Caco-2 (cell line): ENCODE measurements at regions of chr15 and their contacts with region 1.

Region 1: DNA sequence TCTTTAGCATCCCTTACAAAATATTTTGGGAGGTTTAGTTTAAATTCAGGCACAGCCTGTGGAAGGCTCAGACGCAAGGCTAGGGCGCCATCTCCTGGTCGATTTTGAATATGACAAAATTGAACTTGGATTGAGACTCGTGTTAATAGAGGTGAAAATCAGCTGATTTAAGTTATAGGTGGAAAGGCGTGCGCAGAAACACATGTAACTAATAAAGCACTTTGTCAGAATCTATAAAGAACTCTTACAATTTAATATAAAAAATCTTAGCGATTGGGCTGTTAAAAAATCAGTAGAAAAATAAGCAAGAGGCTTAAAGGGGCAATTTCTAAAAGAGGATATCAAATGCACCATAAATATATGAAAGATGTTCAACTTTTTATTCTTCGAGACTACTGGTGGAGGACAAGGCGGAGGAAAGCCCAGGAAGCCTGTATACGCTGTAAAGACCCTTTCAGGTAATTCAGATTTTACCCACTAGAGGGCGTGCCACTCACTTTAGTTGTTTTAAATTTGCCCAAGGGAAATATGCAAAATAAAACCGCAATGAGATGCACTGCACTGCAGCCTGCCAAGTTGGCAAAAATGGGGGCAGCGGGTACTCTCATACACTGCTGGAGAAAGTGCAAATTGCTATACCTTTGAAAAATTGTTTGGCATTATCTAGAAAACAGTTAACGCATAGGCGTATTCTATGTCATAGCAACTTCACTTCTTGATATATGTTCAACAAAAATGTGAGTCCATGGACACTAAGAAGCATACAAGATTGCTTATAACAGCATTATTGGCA is 64.7 kb downstream of the SLC30A4 start:
- DNase-seq: peak; percentile 62 to 82
- H3K4me3 ChIP-seq: peak overlapping the region; percentile 27
- H3K4me3 Mint-ChIP-seq: peak overlapping the region; percentile 65
- H3K27ac Mint-ChIP-seq: peak overlapping the region; percentile 69
- H3K4me1 ChIP-seq: peaks cover 15% of the 10 kb centered on the region
- H3K4me1 Mint-ChIP-seq: peaks cover 10% of the 10 kb centered on the region
- H3K27me3 ChIP-seq: no peaks in the 10 kb centered on the region
- H3K27me3 Mint-ChIP-seq: no peaks in the 10 kb centered on the region
- CTCF ChIP-seq: peak; percentile 66 to 75

Region 2: DNA sequence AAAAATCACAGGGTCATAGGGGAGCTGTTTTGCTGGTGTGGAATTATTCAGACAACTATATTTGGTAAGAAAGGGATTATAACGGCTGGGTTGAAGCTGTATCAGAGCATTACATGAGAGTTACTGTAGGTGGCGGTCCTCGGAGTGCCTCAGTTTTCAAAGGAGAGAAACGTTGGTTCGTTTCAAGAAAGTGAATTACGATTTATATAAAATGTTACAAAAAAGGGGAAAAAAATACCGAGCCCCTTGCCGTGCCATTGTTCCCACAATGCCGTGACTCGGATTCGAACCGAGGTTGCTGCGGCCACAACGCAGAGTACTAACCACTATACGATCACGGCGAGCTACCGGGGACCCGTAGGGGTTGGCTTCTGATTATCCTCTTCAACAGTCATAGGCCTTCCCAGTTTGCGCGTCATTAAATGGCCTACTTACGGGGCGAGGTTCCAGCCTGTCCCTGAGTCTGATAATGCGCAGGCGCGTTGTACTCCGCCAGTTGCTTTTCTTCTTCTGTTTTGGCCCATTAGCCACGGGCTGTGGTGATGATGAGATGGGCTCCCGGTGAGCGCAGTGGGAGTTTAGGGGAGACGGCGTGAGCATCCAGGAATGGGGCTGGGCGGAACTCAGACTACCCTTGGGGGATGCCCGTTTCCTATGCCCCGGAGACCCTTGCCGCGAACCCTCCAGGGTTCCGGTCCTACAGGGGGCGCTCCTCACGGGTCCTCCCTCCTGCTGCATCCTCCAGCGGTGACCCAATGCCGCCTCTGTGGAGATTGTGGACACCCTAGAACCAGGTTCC is 259.3 kb before region 1 on chr15:
- CTCF ChIA-PET with region 1: no interaction called
- POLR2A ChIA-PET with region 1: no interaction called
- intact Hi-C with region 1: loop called (anchors 1 kb)
- DNase-seq: peak; percentile 91 to 94
- H3K4me3 ChIP-seq: peak overlapping the region; percentile 59
- H3K4me3 Mint-ChIP-seq: no peak overlapping the region
- H3K27ac Mint-ChIP-seq: no peak overlapping the region
- H3K4me1 ChIP-seq: no peaks in the 10 kb centered on the region
- H3K4me1 Mint-ChIP-seq: peaks cover 7% of the 10 kb centered on the region
- H3K27me3 ChIP-seq: no peaks in the 10 kb centered on the region
- H3K27me3 Mint-ChIP-seq: no peaks in the 10 kb centered on the region
- CTCF ChIP-seq: peak; percentile 68 to 69

Region 3: DNA sequence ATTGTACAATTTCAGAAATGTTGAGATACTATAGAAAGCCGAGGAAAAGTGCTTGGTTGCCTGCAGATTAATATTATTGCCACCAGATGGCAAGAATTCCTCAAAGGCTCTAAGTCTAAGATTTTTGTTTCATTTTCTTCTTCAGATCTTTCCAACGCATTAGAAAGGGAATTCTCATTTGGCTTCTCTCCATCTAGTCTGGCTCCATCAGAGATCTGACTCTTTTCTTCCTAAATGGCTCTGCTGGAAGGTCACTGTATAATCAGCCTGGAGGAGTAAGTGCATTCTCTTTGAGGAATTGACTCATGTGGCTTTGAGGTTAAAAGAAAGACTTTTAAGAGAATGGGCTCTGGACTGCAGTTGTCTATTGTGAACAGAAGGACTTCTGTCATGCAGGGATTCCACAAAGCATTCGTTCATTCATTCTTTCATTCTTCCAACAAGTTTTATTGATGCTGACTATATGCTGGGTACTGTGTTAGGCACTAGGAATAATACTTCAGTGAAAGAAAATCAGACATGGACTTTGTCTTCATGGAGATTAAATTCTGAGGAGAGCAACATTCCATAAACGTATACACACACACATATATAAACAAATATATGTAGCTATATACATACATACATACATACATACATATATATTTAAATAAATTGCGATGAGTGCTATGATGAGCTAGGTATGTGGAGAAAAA is 150.5 kb before region 1 on chr15:
- CTCF ChIA-PET with region 1: no interaction called
- POLR2A ChIA-PET with region 1: no interaction called
- intact Hi-C with region 1: loop called (anchors 2 kb)
- DNase-seq: peak in 1 of 2 experiments; percentile 29
- H3K4me3 ChIP-seq: no peak overlapping the region
- H3K4me3 Mint-ChIP-seq: peak overlapping the region; percentile 9
- H3K27ac Mint-ChIP-seq: peak overlapping the region; percentile 23
- H3K4me1 ChIP-seq: peaks cover 51% of the 10 kb centered on the region
- H3K4me1 Mint-ChIP-seq: peaks cover 40% of the 10 kb centered on the region
- H3K27me3 ChIP-seq: no peaks in the 10 kb centered on the region
- H3K27me3 Mint-ChIP-seq: no peaks in the 10 kb centered on the region
- CTCF ChIP-seq: peak; percentile 50 to 62

Region 4: GRCh38 chr15:45429974-45430792 is 27.7 kb before region 1 on chr15:
- CTCF ChIA-PET with region 1: interaction called, 3 read pairs
- POLR2A ChIA-PET with region 1: no interaction called
- intact Hi-C with region 1: loop called (anchors 1 kb)
- DNase-seq: peak; percentile 61 to 87
- H3K4me3 ChIP-seq: peak overlapping the region; percentile 66
- H3K4me3 Mint-ChIP-seq: peak overlapping the region; percentile 61
- H3K27ac Mint-ChIP-seq: no peak overlapping the region
- H3K4me1 ChIP-seq: peaks cover 8% of the 10 kb centered on the region; the same call in 1 of the 2 replicates
- H3K4me1 Mint-ChIP-seq: no peaks in the 10 kb centered on the region
- H3K27me3 ChIP-seq: no peaks in the 10 kb centered on the region
- H3K27me3 Mint-ChIP-seq: no peaks in the 10 kb centered on the region
- CTCF ChIP-seq: peak; percentile 99 to 100

Region 5: DNA sequence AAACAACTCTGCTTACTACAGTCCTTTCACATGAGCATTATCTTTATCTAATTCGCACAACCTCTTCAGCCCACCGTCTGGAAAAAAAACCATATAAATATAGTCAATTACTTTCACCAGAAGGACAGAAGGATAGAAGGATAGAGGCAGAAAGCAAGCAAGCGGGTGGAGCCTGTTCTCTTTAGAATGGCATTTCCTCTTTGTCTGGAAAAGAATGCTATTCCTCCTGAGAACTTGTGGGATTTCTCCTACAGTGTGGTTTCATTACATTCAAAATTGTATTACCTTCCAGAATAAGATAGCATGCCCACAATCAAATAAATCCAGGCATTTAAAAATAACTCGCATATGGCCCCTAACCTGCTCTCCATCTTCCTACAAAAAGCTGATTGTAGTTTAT is 41.6 kb after region 1 on chr15:
- CTCF ChIA-PET with region 1: no interaction called
- POLR2A ChIA-PET with region 1: no interaction called
- intact Hi-C with region 1: loop called (anchors 1 kb)
- DNase-seq: no peak
- H3K4me3 ChIP-seq: no peak overlapping the region
- H3K4me3 Mint-ChIP-seq: no peak overlapping the region
- H3K27ac Mint-ChIP-seq: no peak overlapping the region
- H3K4me1 ChIP-seq: no peaks in the 10 kb centered on the region
- H3K4me1 Mint-ChIP-seq: no peaks in the 10 kb centered on the region
- H3K27me3 ChIP-seq: no peaks in the 10 kb centered on the region
- H3K27me3 Mint-ChIP-seq: no peaks in the 10 kb centered on the region
- CTCF ChIP-seq: no peak

Region 6: GRCh38 chr15:45573961-45574629 is 116.3 kb after region 1 on chr15:
- CTCF ChIA-PET with region 1: interaction called, 4 read pairs
- POLR2A ChIA-PET with region 1: no interaction called
- intact Hi-C with region 1: loop called (anchors 1 kb)
- DNase-seq: peak; percentile 54 to 61
- H3K4me3 ChIP-seq: no peak overlapping the region
- H3K4me3 Mint-ChIP-seq: no peak overlapping the region
- H3K27ac Mint-ChIP-seq: no peak overlapping the region
- H3K4me1 ChIP-seq: no peaks in the 10 kb centered on the region
- H3K4me1 Mint-ChIP-seq: no peaks in the 10 kb centered on the region
- H3K27me3 ChIP-seq: no peaks in the 10 kb centered on the region
- H3K27me3 Mint-ChIP-seq: no peaks in the 10 kb centered on the region
- CTCF ChIP-seq: peak; percentile 37 to 63